Motor neuron (in vitro differentiated cells): ENCODE measurements at regions of chr4 and their contacts with region 1.

Region 1: DNA sequence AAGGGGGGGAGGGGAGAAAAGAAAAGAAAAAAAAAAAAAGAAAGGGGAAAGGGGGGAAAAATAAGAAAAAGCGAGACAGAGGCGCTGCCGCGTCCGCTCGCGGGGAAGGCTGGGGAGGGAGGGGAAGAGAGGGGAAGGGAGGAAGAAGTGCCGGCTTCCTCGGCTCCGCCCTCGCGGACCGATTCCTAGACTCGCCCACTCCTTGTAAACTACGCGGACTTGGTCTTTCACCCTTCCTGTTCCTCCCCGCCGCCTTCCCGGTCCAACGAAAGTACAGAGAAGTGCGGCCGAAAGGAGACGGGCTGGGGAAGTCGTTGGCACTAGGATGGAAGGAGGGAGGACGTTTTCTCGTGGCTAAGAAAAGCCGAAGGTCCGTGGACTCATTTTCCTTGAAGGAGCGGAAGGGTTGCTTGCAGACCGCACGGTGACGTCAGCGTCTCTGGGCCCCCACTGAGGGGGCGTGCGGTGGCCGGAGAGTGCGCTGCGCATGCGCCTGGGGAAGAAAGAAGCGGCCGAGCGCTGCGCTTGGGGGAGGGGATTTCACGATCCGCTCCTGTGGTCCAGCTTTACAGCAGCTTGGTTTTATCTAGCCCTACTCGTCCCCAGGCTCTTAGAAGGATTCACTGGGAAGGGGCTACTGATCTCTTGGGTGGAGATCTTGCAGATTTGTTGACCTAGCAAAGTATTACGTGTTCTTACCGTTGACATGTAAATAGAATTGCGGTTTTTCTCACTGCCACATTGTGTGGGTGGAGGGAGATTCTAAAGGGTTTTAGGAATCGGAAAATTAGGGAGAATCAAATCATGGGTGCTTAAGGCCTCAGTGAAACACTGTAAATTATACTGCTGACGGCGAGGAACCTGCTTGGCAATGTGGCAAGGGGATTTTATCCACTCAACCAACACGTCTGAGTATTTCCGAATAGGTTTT is at the start of gene CCNI:
- ATAC-seq: peak; percentile 76 to 87 (median 79)
- H3K4me3 ChIP-seq: peak within 1 kb of the TSS; percentile 66 to 97 (median 81)
- H3K27ac ChIP-seq: peak within 1 kb of the TSS; percentile 98 to 99
- H3K4me1 ChIP-seq: peaks cover 0 to 3% of the 10 kb centered on the region in 2 donors
- total RNA-seq, gene CCNI: 70.2 to 387 (median 250) TPM

Region 2: DNA sequence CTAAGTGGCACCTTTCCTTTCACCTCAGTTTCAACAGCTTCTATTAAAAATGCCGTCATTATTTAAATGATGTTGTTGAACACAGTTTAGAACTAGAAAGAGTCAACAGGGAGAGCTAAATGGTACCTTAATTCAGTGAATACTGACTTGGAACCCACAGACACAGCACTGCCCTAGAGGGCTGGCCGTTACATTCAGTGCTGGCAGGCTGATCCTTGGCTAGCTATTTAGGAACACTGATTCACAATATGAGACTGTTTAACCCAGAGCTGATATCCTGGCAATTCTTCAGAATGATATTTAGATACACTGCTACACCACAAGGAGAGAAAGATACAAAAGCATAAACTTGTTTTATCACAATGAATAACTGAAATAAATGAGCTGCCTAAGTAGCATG is 1122.6 kb before region 1 on chr4:
- in situ Hi-C with region 1: no loop called
- ATAC-seq: no peak
- H3K4me3 ChIP-seq: no peak overlapping the region
- H3K27ac ChIP-seq: no peak overlapping the region
- H3K4me1 ChIP-seq: no peaks in the 10 kb centered on the region

Region 3: DNA sequence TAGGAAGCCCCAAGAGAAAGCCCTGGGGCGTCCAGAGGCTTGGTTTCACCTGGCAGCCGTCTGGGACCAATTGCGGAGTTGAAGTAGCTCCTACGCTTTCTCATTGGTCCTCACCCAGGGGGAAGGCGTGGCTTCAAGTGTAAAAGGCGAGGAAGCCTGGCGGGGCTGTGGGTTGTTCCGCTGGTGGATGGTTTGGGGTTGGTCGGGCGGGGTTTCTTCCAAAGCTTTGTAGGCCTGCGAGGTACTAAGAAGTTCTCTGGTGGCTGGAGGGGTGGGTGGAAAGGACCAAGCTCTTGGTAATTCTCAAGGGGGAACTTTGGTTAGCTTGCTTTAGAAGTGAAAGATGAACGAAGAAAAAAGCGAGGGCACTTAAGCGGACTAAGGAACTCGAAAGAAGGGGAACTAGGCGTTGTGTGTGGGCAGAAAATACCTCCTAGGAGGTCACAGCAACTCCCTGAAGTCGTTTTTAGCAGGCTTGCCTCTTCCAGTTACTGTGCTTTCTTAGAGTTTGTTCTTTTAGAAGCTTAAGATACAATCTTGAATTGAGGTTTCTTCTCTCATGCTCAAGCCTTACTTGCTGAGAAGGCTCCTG is 117.5 kb after region 1 on chr4:
- in situ Hi-C with region 1: loop called in 1 of 9 experiments (anchors 25 kb)
- ATAC-seq: no peak
- H3K4me3 ChIP-seq: no peak overlapping the region
- H3K27ac ChIP-seq: no peak overlapping the region
- H3K4me1 ChIP-seq: no peaks in the 10 kb centered on the region

Region 4: GRCh38 chr4:77203380-77204197 is 127.5 kb after region 1 on chr4:
- in situ Hi-C with region 1: loop called in 2 of 9 experiments (anchors 25 kb)
- ATAC-seq: peak; percentile 50 to 99 (median 78)
- H3K4me3 ChIP-seq: no peak overlapping the region
- H3K27ac ChIP-seq: no peak overlapping the region
- H3K4me1 ChIP-seq: no peaks in the 10 kb centered on the region